CD4-positive, alpha-beta memory T cell (primary cell): ENCODE measurements at regions of chr5 and their contacts with region 1.

Region 1: GRCh38 chr5:96807075-96807654 is 580 bp downstream of the ERAP1 start:
- DNase-seq: no peak
- H3K4me3 ChIP-seq: peak overlapping the region; percentile 48 to 68
- H3K4me3 Mint-ChIP-seq: peak overlapping the region; percentile 92 to 100 (median 98)
- H3K27ac ChIP-seq: peak overlapping the region; percentile 86
- H3K27ac Mint-ChIP-seq: peak overlapping the region; percentile 95 to 100 (median 99)
- H3K4me1 ChIP-seq: peaks cover 63% of the 10 kb centered on the region
- H3K4me1 Mint-ChIP-seq: peaks cover 44 to 79% (median 64%) of the 10 kb centered on the region in 4 donors
- H3K27me3 ChIP-seq: no peaks in the 10 kb centered on the region
- H3K27me3 Mint-ChIP-seq: peaks cover 0 to 3% of the 10 kb centered on the region in 2 donors

Region 2: GRCh38 chr5:96771395-96771794 is 35.8 kb before region 1 on chr5:
- CTCF ChIA-PET with region 1: interaction called, 3 read pairs
- POLR2A ChIA-PET with region 1: interaction called, 12 read pairs
- intact Hi-C with region 1: loop called (anchors 5 kb)
- DNase-seq: no peak
- H3K4me3 ChIP-seq: no peak overlapping the region
- H3K4me3 Mint-ChIP-seq: peak overlapping the region in 1 of 8 donors; percentile 5
- H3K27ac ChIP-seq: no peak overlapping the region
- H3K27ac Mint-ChIP-seq: peak overlapping the region; percentile 57 to 86 (median 74)
- H3K4me1 ChIP-seq: peaks cover 10% of the 10 kb centered on the region
- H3K4me1 Mint-ChIP-seq: peaks cover 8 to 18% (median 15%) of the 10 kb centered on the region in 4 donors
- H3K27me3 ChIP-seq: no peaks in the 10 kb centered on the region
- H3K27me3 Mint-ChIP-seq: no peaks in the 10 kb centered on the region

Region 3: GRCh38 chr5:96790961-96791504 is 16.1 kb before region 1 on chr5:
- CTCF ChIA-PET with region 1: interaction called, 6 read pairs
- POLR2A ChIA-PET with region 1: interaction called, 18 read pairs
- intact Hi-C with region 1: no loop called
- DNase-seq: no peak
- H3K4me3 ChIP-seq: no peak overlapping the region
- H3K4me3 Mint-ChIP-seq: peak overlapping the region in 1 of 8 donors; percentile 16
- H3K27ac ChIP-seq: no peak overlapping the region
- H3K27ac Mint-ChIP-seq: peak overlapping the region; percentile 36 to 91 (median 57)
- H3K4me1 ChIP-seq: peaks cover 21% of the 10 kb centered on the region
- H3K4me1 Mint-ChIP-seq: peaks cover 27 to 39% (median 36%) of the 10 kb centered on the region in 4 donors
- H3K27me3 ChIP-seq: no peaks in the 10 kb centered on the region
- H3K27me3 Mint-ChIP-seq: no peaks in the 10 kb centered on the region

Region 4: GRCh38 chr5:96885518-96886338 is 78.6 kb after region 1 on chr5:
- CTCF ChIA-PET with region 1: interaction called, 3 read pairs
- POLR2A ChIA-PET with region 1: interaction called, 13 read pairs
- intact Hi-C with region 1: no loop called
- DNase-seq: peak; percentile 55 to 79 (median 69)
- H3K4me3 ChIP-seq: peak overlapping the region; percentile 8
- H3K4me3 Mint-ChIP-seq: peak overlapping the region; percentile 55 to 85 (median 70)
- H3K27ac ChIP-seq: peak overlapping the region; percentile 43
- H3K27ac Mint-ChIP-seq: peak overlapping the region; percentile 77 to 98 (median 96)
- H3K4me1 ChIP-seq: peaks cover 61% of the 10 kb centered on the region
- H3K4me1 Mint-ChIP-seq: peaks cover 53 to 75% (median 65%) of the 10 kb centered on the region in 4 donors
- H3K27me3 ChIP-seq: no peaks in the 10 kb centered on the region
- H3K27me3 Mint-ChIP-seq: no peaks in the 10 kb centered on the region

Region 5: GRCh38 chr5:97162045-97162444 is 354.9 kb after region 1 on chr5:
- CTCF ChIA-PET with region 1: interaction called, 7 read pairs
- POLR2A ChIA-PET with region 1: interaction called, 6 read pairs
- intact Hi-C with region 1: loop called (anchors 5 kb)
- DNase-seq: peak; percentile 44 to 61 (median 59)
- H3K4me3 ChIP-seq: no peak overlapping the region
- H3K4me3 Mint-ChIP-seq: no peak overlapping the region
- H3K27ac ChIP-seq: no peak overlapping the region
- H3K27ac Mint-ChIP-seq: peak overlapping the region in 4 of 7 donors; percentile 18 to 83 (median 45)
- H3K4me1 ChIP-seq: peaks cover 3% of the 10 kb centered on the region
- H3K4me1 Mint-ChIP-seq: peaks cover 3 to 18% (median 6%) of the 10 kb centered on the region in 4 donors
- H3K27me3 ChIP-seq: no peaks in the 10 kb centered on the region
- H3K27me3 Mint-ChIP-seq: no peaks in the 10 kb centered on the region